GM12878 (cell line): ENCODE measurements at regions of chr9 and their contacts with region 1.

Region 1: GRCh38 chr9:84697509-84698114 is 28.1 kb downstream of the NTRK2 start:
- DNase-seq: no peak
- ATAC-seq: peak; percentile 71
- H3K4me3 ChIP-seq: no peak overlapping the region
- H3K27ac ChIP-seq: no peak overlapping the region
- H3K4me1 ChIP-seq: peaks cover 26% of the 10 kb centered on the region
- H3K27me3 ChIP-seq: no peaks in the 10 kb centered on the region
- CTCF ChIP-seq: peak; percentile 88 to 96 (median 94)
- EP300 ChIP-seq: no peak
- POLR2A ChIP-seq: no peak
- RAD21 ChIP-seq: peak; percentile 90

Region 2: GRCh38 chr9:84397151-84397728 is 300.4 kb before region 1 on chr9:
- CTCF ChIA-PET with region 1: interaction called, 44 read pairs
- POLR2A ChIA-PET with region 1: no interaction called
- RAD21 ChIA-PET with region 1: interaction called, 5 read pairs
- SMC1A ChIA-PET with region 1: interaction called, 4 read pairs
- in situ Hi-C with region 1: no loop called
- intact Hi-C with region 1: no loop called
- DNase-seq: peak; percentile 8
- ATAC-seq: peak; percentile 96
- H3K4me3 ChIP-seq: no peak overlapping the region
- H3K27ac ChIP-seq: no peak overlapping the region
- H3K4me1 ChIP-seq: no peaks in the 10 kb centered on the region
- H3K27me3 ChIP-seq: peaks cover 0 to 2% of the 10 kb centered on the region in 2 experiments; a peak in 1 of 4 replicates
- CTCF ChIP-seq: peak; percentile 77 to 91 (median 80)
- EP300 ChIP-seq: no peak
- POLR2A ChIP-seq: no peak
- RAD21 ChIP-seq: peak; percentile 87

Region 3: DNA sequence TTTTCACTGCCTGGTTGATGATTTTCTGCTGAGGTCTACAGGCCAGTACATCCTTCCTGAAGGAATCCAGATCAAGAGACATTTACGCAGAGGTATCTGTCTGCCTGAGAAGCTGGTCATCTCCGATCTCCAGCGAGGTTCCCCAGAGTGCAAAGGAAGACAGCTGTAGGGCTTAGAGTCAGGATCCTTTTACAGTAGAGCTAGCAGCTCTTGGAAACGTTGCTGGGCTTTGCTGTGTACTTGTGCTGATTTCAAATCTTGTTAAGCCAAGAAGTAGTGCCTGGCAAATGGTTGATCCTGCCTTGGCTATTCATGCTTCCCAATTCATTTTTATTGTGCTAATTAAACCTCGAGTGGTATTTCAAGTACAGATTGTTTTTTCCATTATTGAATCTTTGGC is 20.9 kb after region 1 on chr9:
- CTCF ChIA-PET with region 1: interaction called, 10 read pairs
- POLR2A ChIA-PET with region 1: no interaction called
- RAD21 ChIA-PET with region 1: interaction called, 5 read pairs
- SMC1A ChIA-PET with region 1: interaction called, 8 read pairs
- in situ Hi-C with region 1: no loop called
- intact Hi-C with region 1: no loop called
- DNase-seq: no peak
- ATAC-seq: no peak
- H3K4me3 ChIP-seq: no peak overlapping the region
- H3K27ac ChIP-seq: no peak overlapping the region
- H3K4me1 ChIP-seq: no peaks in the 10 kb centered on the region
- H3K27me3 ChIP-seq: no peaks in the 10 kb centered on the region
- CTCF ChIP-seq: no peak
- EP300 ChIP-seq: no peak
- POLR2A ChIP-seq: no peak
- RAD21 ChIP-seq: no peak

Region 4: DNA sequence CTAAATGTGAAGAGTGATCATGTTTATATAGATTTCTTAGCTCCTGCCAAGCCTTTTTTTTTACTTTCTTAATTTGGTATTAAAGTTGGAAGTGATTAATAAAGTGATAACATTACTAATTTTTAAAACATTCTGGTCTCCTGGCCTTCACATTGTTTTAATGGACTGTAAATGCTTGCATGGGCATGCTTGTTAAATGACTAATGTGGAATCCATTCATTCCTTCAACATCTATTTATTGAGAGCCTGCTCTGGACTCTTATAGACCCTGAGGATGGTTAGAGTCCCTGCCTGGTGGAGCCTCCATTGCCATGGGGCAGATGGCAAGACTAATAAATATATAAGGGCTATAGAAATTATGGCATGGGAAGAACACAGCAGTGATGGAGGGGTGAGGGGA is 75.4 kb after region 1 on chr9:
- CTCF ChIA-PET with region 1: interaction called, 792 read pairs
- POLR2A ChIA-PET with region 1: interaction called, 3 read pairs
- RAD21 ChIA-PET with region 1: interaction called, 582 read pairs
- SMC1A ChIA-PET with region 1: interaction called, 686 read pairs
- in situ Hi-C with region 1: loop called (anchors 5 kb)
- intact Hi-C with region 1: no loop called
- DNase-seq: no peak
- ATAC-seq: no peak
- H3K4me3 ChIP-seq: no peak overlapping the region
- H3K27ac ChIP-seq: no peak overlapping the region
- H3K4me1 ChIP-seq: peaks cover 4% of the 10 kb centered on the region
- H3K27me3 ChIP-seq: no peaks in the 10 kb centered on the region
- CTCF ChIP-seq: no peak
- EP300 ChIP-seq: no peak
- POLR2A ChIP-seq: no peak
- RAD21 ChIP-seq: no peak

Region 5: DNA sequence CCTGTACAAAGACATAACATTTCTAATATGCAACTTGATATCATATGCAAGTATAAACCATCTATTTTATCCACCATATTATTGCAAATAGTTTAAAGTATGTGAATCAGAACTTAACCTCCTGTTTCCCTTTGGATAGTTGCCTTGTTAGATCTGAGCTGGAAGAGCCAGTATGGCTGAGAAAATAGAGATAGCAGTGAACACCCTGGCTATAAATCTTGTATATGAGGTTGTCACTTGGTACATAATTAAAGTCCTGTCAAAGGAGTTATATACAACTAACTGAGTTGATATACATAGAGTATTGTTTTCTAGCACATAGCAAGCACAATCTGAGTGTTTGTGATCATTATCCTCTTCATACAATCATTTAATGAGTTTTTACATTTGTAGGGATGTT is 244.2 kb after region 1 on chr9:
- CTCF ChIA-PET with region 1: no interaction called
- POLR2A ChIA-PET with region 1: no interaction called
- RAD21 ChIA-PET with region 1: no interaction called
- SMC1A ChIA-PET with region 1: no interaction called
- in situ Hi-C with region 1: no loop called
- intact Hi-C with region 1: no loop called
- DNase-seq: no peak
- ATAC-seq: no peak
- H3K4me3 ChIP-seq: no peak overlapping the region
- H3K27ac ChIP-seq: no peak overlapping the region
- H3K4me1 ChIP-seq: no peaks in the 10 kb centered on the region
- H3K27me3 ChIP-seq: no peaks in the 10 kb centered on the region; a peak in 1 of 4 replicates
- CTCF ChIP-seq: no peak
- EP300 ChIP-seq: no peak
- POLR2A ChIP-seq: no peak
- RAD21 ChIP-seq: no peak

Region 6: DNA sequence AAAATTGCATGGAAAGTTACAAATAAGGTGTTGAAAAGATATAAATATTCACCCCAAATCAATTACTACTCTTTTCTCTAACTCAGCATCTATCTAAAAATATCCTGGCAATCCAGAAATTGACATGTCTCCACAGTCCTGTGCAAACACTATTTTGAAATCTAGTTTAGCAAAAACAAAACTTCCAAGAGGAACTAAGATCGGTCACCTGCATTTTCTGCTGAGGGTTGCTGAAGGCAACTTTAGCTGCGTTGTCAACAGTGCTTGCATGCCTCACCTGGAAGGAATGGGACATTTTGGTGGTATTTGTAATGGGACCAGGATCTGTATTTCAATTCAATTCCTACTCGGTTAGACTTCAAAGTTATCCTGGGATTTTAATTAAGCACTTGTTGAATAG is 370.2 kb after region 1 on chr9:
- CTCF ChIA-PET with region 1: interaction called, 4 read pairs
- POLR2A ChIA-PET with region 1: no interaction called
- RAD21 ChIA-PET with region 1: interaction called, 3 read pairs
- SMC1A ChIA-PET with region 1: interaction called, 3 read pairs
- in situ Hi-C with region 1: no loop called
- intact Hi-C with region 1: loop called (anchors 10 kb)
- DNase-seq: no peak
- ATAC-seq: peak; percentile 88
- H3K4me3 ChIP-seq: no peak overlapping the region
- H3K27ac ChIP-seq: no peak overlapping the region
- H3K4me1 ChIP-seq: peaks cover 30% of the 10 kb centered on the region
- H3K27me3 ChIP-seq: no peaks in the 10 kb centered on the region
- CTCF ChIP-seq: no peak
- EP300 ChIP-seq: peak in 1 of 2 experiments; percentile 51; a peak in 1 of 4 replicates
- POLR2A ChIP-seq: no peak
- RAD21 ChIP-seq: no peak

Region 7: DNA sequence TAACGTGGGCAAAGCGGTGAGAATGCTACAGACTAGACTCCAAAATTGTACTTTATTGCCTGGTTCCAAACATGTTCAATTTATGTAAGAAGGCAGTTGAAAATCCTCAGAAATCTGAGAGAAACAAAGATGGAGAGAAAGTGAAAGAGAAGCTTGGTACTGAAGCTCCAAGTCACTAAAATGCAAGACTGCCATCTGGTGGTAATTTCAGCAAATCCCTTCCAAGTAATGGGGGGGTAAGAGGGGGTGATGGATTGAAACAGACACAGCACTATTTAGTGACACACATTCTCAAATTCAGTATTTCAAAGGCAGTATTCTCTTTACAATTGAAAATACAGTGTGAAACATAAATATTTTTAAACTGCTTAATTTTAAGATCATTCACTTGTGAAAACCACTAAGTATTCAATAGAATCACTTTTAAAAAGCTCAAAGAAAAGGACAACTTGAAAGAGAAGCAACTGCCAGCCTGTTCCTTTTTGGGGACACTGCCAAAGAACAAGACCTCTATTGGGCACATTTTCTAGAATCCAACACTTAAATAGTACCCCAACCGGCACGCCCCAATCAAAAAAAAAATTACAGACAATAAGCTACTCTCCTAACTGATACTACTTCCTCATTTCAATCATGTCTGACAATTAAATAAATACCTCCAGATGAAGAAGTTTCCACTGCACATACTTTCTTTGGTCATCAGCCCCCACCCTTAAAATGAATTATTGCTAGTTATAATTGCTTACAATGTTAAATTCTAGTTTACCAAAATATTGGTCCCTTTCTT is 912.7 kb after region 1 on chr9:
- CTCF ChIA-PET with region 1: interaction called, 12 read pairs
- POLR2A ChIA-PET with region 1: no interaction called
- RAD21 ChIA-PET with region 1: interaction called, 8 read pairs
- SMC1A ChIA-PET with region 1: no interaction called
- in situ Hi-C with region 1: no loop called
- intact Hi-C with region 1: no loop called
- DNase-seq: peak; percentile 44
- ATAC-seq: peak; percentile 99
- H3K4me3 ChIP-seq: no peak overlapping the region
- H3K27ac ChIP-seq: peak overlapping the region; percentile 48; the same call in 1 of the 2 replicates
- H3K4me1 ChIP-seq: peaks cover 4% of the 10 kb centered on the region; the same call in 1 of the 2 replicates
- H3K27me3 ChIP-seq: no peaks in the 10 kb centered on the region
- CTCF ChIP-seq: peak; percentile 68 to 88 (median 79); a peak in 5 of 6 replicates
- EP300 ChIP-seq: no peak
- POLR2A ChIP-seq: no peak
- RAD21 ChIP-seq: peak; percentile 87